IMR-90 (cell line): ENCODE measurements at regions of chr9 and their contacts with region 1.

Region 1: DNA sequence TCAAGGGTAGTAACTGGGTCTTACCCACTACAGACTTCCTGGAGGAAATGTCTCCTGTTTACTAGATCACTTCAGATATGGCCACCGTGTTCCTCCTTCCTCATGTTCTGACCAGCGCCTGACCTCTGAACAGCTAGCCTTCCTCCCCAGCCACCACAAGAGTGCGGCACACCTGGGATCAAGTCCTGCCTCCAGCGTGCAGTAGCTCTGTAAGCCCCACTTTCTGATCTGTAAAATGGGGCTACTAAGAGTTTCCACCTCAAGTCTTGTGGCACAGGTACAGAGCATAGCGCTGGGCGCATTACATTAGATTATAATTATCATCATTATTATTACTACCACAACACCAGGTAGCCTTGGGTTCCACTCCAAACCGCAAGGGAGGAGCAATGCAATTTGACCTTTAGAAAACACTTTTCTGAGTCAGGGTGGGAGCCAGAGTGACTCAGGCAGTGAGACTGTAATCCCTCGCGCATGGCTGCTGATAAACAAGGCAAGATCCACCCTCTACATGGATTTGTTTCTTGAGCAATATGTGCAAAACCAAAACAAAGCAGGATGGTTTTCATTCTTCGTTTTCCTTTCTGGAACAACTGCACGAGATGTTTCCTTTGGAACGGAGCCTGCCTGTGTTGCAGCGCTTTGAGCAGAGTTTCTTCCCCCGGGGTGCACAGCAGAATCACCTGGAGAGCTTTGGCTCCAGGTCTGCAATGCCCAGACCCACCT is 65.0 kb upstream of the ANGPTL2 start:
- DNase-seq: peak; percentile 99
- ATAC-seq: peak; percentile 81
- H3K4me3 ChIP-seq: no peak overlapping the region
- H3K27ac ChIP-seq: peak overlapping the region; percentile 97
- H3K4me1 ChIP-seq: peaks cover 37% of the 10 kb centered on the region
- H3K27me3 ChIP-seq: no peaks in the 10 kb centered on the region
- CTCF ChIP-seq: no peak
- POLR2A ChIP-seq: no peak
- RAD21 ChIP-seq: peak; percentile 17

Region 2: DNA sequence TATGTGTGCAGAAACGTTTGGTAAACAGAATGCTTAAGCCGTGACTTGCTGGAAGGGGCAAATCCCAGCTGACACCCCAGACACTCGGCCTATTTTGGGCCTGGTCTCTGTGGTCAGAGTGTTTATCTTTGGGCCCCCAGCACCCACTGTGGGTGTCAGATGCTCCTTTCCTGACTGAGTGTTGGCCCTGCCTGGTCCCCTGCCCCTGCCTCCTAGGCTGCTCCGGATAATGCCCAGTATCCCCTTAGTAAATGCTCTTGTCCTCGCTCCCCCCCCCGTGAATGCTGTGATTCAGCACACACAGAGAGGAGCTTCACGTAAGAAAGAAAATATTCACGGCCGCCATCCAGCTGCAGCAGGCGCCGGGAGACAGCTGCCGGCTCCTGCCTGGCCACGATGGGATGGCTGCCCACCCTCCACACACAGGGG is 53.6 kb before region 1 on chr9:
- CTCF ChIA-PET with region 1: no interaction called
- POLR2A ChIA-PET with region 1: interaction called, 4 read pairs
- dilution Hi-C with region 1: no loop called
- in situ Hi-C with region 1: no loop called
- intact Hi-C with region 1: loop called (anchors 1 kb)
- DNase-seq: peak; percentile 91
- ATAC-seq: peak; percentile 68
- H3K4me3 ChIP-seq: no peak overlapping the region
- H3K27ac ChIP-seq: peak overlapping the region; percentile 79
- H3K4me1 ChIP-seq: peaks cover 43% of the 10 kb centered on the region
- H3K27me3 ChIP-seq: 0 out of 2 replicates have a peak, but pooled peaks cover 4% of the 10 kb centered on the region
- CTCF ChIP-seq: no peak
- POLR2A ChIP-seq: peak; percentile 71
- RAD21 ChIP-seq: 0 out of 2 replicates have a peak, but pooled peaks have one; percentile 15

Region 3: GRCh38 chr9:127175764-127176163 is 11.6 kb before region 1 on chr9:
- CTCF ChIA-PET with region 1: no interaction called
- POLR2A ChIA-PET with region 1: interaction called, 15 read pairs
- dilution Hi-C with region 1: no loop called
- in situ Hi-C with region 1: no loop called
- intact Hi-C with region 1: no loop called
- DNase-seq: no peak
- ATAC-seq: no peak
- H3K4me3 ChIP-seq: no peak overlapping the region
- H3K27ac ChIP-seq: no peak overlapping the region
- H3K4me1 ChIP-seq: peaks cover 15% of the 10 kb centered on the region
- H3K27me3 ChIP-seq: no peaks in the 10 kb centered on the region
- CTCF ChIP-seq: no peak
- POLR2A ChIP-seq: no peak
- RAD21 ChIP-seq: no peak

Region 4: GRCh38 chr9:127473501-127473900 is 286.1 kb after region 1 on chr9:
- CTCF ChIA-PET with region 1: no interaction called
- POLR2A ChIA-PET with region 1: no interaction called
- dilution Hi-C with region 1: no loop called
- in situ Hi-C with region 1: no loop called
- intact Hi-C with region 1: no loop called
- DNase-seq: no peak
- ATAC-seq: no peak
- H3K4me3 ChIP-seq: no peak overlapping the region
- H3K27ac ChIP-seq: no peak overlapping the region
- H3K4me1 ChIP-seq: no peaks in the 10 kb centered on the region
- H3K27me3 ChIP-seq: no peaks in the 10 kb centered on the region
- CTCF ChIP-seq: no peak
- POLR2A ChIP-seq: no peak
- RAD21 ChIP-seq: no peak